Prostate gland (tissue), 2 donors: ENCODE measurements at regions of chr7 and their contacts with region 1.

Region 1: DNA sequence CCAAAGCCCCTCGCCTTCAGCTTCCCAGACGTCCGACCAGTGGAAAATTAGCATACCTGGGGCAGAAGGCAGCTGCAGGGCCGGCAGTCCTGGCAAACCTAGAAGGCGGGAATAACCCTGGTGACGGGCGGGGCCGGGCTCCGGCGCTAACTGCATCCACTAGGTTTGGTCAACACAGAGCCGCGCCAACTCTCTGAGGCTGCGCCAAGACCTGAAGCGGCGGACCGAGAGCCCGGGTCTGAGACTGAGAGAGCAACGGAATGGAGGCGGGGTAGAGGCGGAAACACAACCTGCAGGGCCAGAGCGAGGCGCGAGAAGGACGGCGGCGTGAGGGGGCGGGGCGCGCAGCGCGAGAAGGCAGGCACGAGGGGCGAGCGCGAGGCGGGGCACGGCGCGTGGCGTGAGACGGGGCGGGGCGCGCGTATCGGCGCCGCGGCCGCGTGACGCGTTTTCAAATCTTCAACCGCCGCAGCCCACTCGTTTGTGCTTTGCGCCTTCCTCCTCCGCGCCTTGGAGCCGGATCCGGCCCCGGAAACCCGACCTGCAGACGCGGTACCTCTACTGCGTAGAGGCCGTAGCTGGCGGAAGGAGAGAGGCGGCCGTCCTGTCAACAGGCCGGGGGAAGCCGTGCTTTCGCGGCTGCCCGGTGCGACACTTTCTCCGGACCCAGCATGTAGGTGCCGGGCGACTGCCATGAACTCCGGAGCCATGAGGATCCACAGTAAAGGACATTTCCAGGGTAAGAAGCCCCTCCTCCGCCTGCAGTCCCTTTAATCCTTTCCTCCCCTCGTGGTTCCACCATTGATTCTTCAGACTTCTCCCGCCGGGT is at the starts of genes DBF4 and SLC25A40:
- DNase-seq: peak; percentile 96
- H3K4me3 ChIP-seq: peak within 1 kb of the TSS; percentile 76 to 77
- H3K27ac ChIP-seq: peak within 1 kb of the TSS; percentile 96
- H3K4me1 ChIP-seq: no peaks in the 10 kb centered on the region
- H3K27me3 ChIP-seq: no peaks in the 10 kb centered on the region
- CTCF ChIP-seq: peak in 2 of 4 experiments; percentile 21 to 37
- POLR2A ChIP-seq: peak; percentile 79
- total RNA-seq, gene DBF4: 11.0 to 24.9 TPM
- total RNA-seq, gene SLC25A40: 19.5 to 33.9 TPM

Region 2: GRCh38 chr7:87345166-87345927 is 530.9 kb before region 1 on chr7 and contains the start of gene CROT:
- intact Hi-C with region 1: loop called (anchors 10 kb)
- DNase-seq: peak; percentile 97
- H3K4me3 ChIP-seq: peak within 1 kb of the TSS; percentile 46 to 64
- H3K27ac ChIP-seq: peak within 1 kb of the TSS; percentile 86 to 88
- H3K4me1 ChIP-seq: peaks cover 6% of the 10 kb centered on the region
- H3K27me3 ChIP-seq: no peaks in the 10 kb centered on the region
- CTCF ChIP-seq: peak in 3 of 4 experiments; percentile 14 to 51 (median 34)
- POLR2A ChIP-seq: peak; percentile 86
- total RNA-seq, gene CROT: 17.0 to 35.0 TPM

Region 3: DNA sequence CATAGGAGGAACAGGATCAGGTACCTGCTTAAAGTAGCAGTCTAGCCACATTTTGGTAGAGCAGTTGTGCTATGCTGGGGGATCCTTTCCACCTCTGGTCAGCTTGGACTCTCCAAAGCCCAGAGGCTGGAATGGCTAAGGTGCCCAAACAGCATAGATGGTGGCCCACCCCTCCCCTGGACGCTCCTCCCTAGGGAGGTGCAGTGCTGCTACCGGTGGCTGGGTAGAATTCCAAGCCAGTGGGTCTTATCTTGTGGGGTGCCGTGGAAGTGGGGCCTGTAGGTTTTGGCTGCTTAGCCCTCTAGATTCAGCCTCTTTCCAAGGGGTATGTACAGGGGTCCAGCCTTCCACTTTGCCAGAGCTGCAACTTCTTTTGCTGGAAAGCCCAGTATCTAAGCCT is 204.0 kb before region 1 on chr7:
- intact Hi-C with region 1: no loop called
- DNase-seq: no peak
- H3K4me3 ChIP-seq: no peak overlapping the region
- H3K27ac ChIP-seq: no peak overlapping the region
- H3K4me1 ChIP-seq: no peaks in the 10 kb centered on the region
- H3K27me3 ChIP-seq: no peaks in the 10 kb centered on the region
- CTCF ChIP-seq: no peak
- POLR2A ChIP-seq: no peak

Region 4: GRCh38 chr7:87944531-87944930 is 68.3 kb after region 1 on chr7:
- intact Hi-C with region 1: no loop called
- DNase-seq: no peak
- H3K4me3 ChIP-seq: no peak overlapping the region
- H3K27ac ChIP-seq: no peak overlapping the region
- H3K4me1 ChIP-seq: no peaks in the 10 kb centered on the region
- H3K27me3 ChIP-seq: no peaks in the 10 kb centered on the region
- CTCF ChIP-seq: no peak
- POLR2A ChIP-seq: no peak

Region 5: DNA sequence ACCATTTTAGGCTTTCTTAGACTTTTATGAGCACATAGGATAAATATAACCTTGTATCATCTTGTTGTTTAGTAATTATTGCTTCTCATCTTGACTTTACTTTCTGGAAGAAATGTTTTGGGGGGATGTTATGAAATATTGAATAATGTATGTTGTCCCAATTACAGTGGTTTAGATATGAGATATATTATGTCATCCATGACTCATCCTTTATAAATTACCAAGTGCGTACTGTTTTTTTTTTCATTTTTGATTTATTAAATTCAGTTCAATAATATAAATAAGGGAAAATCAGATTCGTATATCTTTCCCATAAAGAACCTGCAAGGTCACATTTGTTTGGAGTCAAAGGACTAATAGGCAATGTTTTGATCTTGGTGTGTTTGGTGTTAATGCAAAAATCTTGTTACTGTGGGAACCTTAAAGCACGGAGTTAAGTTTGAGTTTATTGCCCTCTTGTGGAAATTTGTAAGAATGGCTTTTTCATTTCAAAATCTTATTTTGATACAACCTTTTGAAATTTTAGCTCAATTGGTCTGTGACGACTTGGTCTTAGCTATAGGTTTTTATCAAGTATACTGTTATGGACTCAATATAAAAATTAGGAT is 235.0 kb after region 1 on chr7:
- intact Hi-C with region 1: loop called (anchors 10 kb)
- DNase-seq: no peak
- H3K4me3 ChIP-seq: no peak overlapping the region
- H3K27ac ChIP-seq: peak overlapping the region in 1 of 2 donors; percentile 6
- H3K4me1 ChIP-seq: no peaks in the 10 kb centered on the region
- H3K27me3 ChIP-seq: no peaks in the 10 kb centered on the region
- CTCF ChIP-seq: peak in 3 of 4 experiments; percentile 42 to 64 (median 59)
- POLR2A ChIP-seq: no peak